ENCODE measurements at regions of chr17 and their contacts with region 1.

Region 1: DNA sequence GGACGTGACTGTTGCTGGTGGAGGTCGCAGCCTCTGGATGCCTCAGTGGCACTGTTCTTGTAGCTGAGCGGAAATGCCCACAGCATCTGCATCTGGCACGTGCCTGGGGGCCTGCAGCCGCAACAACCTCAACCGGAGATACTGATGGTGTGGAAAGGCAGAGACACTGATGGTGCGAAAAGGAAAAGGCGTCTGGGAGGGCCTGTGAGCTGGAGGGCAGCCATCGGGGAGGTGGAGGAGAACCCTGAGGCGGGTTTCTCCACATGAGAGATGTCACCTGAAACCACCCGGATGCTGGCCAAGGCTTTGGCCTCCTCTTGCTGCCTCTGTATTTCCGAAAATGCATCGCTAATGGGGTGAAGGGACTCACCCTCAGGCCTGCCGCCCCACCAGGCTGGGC is 284.8 kb upstream of the WSB1 start:
- DNase-seq: no peak
- H3K4me3 Mint-ChIP-seq: no peak overlapping the region
- H3K27ac Mint-ChIP-seq: no peak overlapping the region
- H3K4me1 Mint-ChIP-seq: no peaks in the 10 kb centered on the region
- H3K27me3 Mint-ChIP-seq: no peaks in the 10 kb centered on the region

Region 2: GRCh38 chr17:27049104-27049784 is 40.2 kb after region 1 on chr17:
- CTCF ChIA-PET with region 1: no interaction called
- intact Hi-C with region 1: loop called (anchors 10 kb)
- DNase-seq: peak; percentile 54
- H3K4me3 Mint-ChIP-seq: no peak overlapping the region
- H3K27ac Mint-ChIP-seq: no peak overlapping the region
- H3K4me1 Mint-ChIP-seq: no peaks in the 10 kb centered on the region
- H3K27me3 Mint-ChIP-seq: peaks cover 3% of the 10 kb centered on the region

Measured in activated naive CD4-positive, alpha-beta T cell treated with anti-CD3 and anti-CD28 coated beads for 36 hours (primary cell).